ENCODE measurements at regions of chr3 and their contacts with region 1.

Region 1: GRCh38 chr3:23805633-23806533 is at the start of gene UBE2E1:
- DNase-seq: peak; percentile 42 to 93 (median 60)

Region 2: DNA sequence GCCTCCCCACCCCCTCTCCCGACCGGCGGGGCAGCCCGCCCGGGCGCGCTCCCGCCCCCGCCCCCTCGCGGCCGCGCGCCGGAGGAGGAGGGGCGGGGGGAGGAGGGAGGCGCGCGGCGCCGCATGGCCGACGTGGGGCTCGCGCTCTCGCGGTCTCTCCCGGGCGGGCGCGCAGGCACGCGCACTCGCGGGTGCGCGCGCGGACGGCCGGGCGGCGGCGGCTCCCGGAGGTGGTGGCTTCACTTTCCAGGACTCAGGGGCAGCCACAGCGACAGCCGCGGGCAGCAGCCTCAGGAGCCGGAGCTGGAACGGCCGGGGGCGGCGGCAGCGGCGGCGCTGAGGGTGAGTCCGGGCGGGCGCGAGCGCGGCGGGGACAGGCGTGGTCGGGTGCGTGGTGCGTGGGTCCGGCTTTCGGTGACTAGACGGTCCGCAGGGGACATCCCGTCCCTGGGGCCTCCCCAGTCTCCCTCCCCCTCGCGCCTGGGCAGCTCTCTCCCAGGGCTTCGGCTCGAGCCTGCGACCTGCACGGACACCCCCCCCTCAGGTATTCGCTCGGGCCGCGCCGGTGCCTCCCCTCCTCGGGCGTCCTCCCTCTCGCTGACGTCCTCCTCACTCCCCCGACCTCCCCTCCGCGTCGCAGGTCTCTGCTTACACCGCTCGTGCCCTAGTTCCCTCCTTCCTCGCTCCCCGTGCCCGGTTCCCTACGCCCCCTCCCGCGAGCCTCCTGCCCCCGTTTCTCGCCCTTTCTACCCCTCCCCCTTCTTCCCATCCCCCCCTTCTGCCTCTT is 602.8 kb before region 1 on chr3 and contains the start of gene UBE2E2:
- intact Hi-C with region 1: loop called (anchors 5 kb)
- DNase-seq: peak; percentile 51 to 96 (median 72)

Region 3: DNA sequence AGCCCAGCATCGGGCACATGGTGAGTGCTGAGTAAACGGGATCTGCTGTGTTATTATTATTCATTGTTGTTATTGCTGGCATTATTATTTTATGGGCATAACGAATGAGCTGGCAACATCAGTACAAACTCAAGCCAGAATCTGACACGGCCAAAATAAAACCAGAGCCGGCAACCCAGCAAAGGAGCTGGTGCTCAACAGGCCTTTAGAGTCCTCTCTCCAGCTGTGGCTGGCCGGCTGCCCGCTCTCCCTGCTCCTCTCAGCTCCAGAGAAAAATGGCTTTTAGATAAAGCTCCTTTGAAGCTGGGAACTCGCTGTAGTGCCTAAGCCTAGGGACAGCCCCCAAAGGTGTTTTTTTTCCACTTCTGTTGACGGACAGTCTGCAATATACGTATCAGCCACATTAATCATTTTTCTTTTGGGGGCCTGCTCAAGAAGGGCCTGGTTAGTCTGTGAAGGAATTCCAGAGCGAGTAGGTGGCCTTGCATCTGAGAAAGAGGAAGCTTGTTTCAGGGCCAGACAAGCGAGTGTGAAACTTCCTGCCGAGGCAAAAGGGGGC is 194.1 kb before region 1 on chr3:
- intact Hi-C with region 1: loop called (anchors 10 kb)
- DNase-seq: peak; percentile 60 to 97 (median 79)

Region 4: GRCh38 chr3:23761440-23761896 is 44.4 kb before region 1 on chr3:
- intact Hi-C with region 1: no loop called
- DNase-seq: no peak